ENCODE measurements at regions of chr18 and their contacts with region 1.

Region 1: GRCh38 chr18:48445540-48445939 is 36.4 kb upstream of the ZBTB7C start:
- DNase-seq: peak; percentile 83 to 88
- H3K4me3 ChIP-seq: no peak overlapping the region
- H3K27ac ChIP-seq: no peak overlapping the region
- H3K4me1 ChIP-seq: peaks cover 0 to 25% (median 18%) of the 10 kb centered on the region in 4 donors
- H3K27me3 ChIP-seq: peaks cover 0 to 28% (median 5%) of the 10 kb centered on the region in 3 donors
- CTCF ChIP-seq: peak in 5 of 7 experiments; percentile 68 to 85 (median 81)
- EP300 ChIP-seq: no peak
- POLR2A ChIP-seq: no peak

Region 2: GRCh38 chr18:48030616-48031480 is 414.7 kb before region 1 on chr18:
- intact Hi-C with region 1: loop called (anchors 5 kb)
- DNase-seq: peak; percentile 67 to 88
- H3K4me3 ChIP-seq: no peak overlapping the region
- H3K27ac ChIP-seq: no peak overlapping the region
- H3K4me1 ChIP-seq: peaks cover 0 to 19% (median 16%) of the 10 kb centered on the region in 4 donors
- H3K27me3 ChIP-seq: no peaks in the 10 kb centered on the region
- CTCF ChIP-seq: peak in 5 of 7 experiments; percentile 63 to 77 (median 71)
- EP300 ChIP-seq: no peak
- POLR2A ChIP-seq: no peak

Region 3: GRCh38 chr18:48330403-48331022 is 115.0 kb before region 1 on chr18:
- intact Hi-C with region 1: loop called (anchors 10 kb)
- DNase-seq: peak in 1 of 2 donors; percentile 42
- H3K4me3 ChIP-seq: no peak overlapping the region
- H3K27ac ChIP-seq: no peak overlapping the region
- H3K4me1 ChIP-seq: peaks cover 0 to 18% (median 3%) of the 10 kb centered on the region in 4 donors
- H3K27me3 ChIP-seq: peaks cover 0 to 3% (median 0%) of the 10 kb centered on the region in 3 donors
- CTCF ChIP-seq: no peak
- EP300 ChIP-seq: no peak
- POLR2A ChIP-seq: no peak

Measured in stomach (tissue), 19 donors.